ENCODE measurements at regions of chr22 and their contacts with region 1.

Region 1: DNA sequence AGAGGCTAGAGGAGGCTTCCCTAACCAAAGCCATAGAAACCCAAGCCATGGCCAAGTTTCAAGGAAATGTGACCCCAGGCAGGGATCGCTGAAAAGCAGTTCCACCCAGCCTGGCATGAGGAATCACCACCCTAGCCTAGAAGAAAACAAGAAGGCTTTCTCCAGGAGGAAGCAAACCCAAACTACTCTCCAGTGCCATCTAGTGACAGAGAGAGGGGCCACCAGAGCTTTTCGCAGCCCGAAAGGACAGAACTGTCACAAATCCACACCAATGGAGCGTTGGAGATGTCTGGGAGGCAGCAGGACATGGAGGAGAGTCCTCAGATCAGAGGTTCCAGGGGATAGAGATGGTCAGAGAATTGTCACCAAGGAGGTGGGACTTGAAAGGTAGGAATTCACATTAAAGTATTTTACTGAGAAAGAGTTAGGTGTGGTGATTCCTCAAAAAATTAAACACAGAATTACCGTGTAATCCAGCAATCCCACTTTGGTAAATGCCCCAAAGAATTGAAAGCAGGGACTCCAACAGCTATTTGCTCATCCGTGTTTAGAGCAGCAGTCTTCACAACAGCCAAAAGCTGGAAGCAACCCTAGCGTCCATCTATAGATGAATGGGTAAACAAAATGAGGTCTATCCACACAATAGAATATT is 67.3 kb upstream of the NUP50 start:
- DNase-seq: peak; percentile 22
- H3K4me3 Mint-ChIP-seq: no peak overlapping the region
- H3K27ac Mint-ChIP-seq: no peak overlapping the region
- H3K4me1 Mint-ChIP-seq: peaks cover 3% of the 10 kb centered on the region
- H3K27me3 Mint-ChIP-seq: peaks cover 16% of the 10 kb centered on the region

Region 2: DNA sequence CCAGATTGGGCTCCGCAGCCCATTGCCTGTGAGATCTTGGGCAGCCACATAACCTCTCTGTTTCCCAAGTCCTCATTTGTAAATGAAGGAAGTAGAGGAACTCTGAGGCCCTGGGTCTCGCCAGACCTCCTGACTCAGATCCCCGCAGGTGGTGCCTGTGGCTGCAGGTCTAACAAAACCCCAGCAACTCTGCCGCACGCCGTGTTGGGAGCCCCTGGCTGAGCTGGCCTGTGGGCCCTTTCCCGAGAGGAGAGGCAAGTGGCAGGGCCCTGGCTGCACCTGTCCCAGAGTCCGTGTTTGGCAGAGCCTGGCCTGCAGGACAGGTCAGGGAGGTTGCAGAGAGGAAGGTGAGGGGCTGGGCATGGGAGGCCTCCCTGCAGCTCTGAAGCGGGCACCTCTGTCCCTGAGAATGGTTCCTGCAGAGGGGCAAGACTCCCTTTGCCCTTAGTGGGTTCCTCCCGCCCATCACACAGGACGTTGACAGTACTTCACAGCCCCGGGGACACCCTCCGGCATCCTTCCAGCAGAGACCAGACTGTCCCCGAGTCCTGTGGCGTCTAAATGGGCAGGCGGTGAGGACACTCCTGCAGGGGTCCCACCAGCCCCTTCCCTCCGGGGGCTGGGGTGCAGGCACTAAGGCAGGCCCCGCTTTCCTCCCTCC is 276.3 kb before region 1 on chr22:
- intact Hi-C with region 1: loop called (anchors 1 kb)
- DNase-seq: no peak
- H3K4me3 Mint-ChIP-seq: no peak overlapping the region
- H3K27ac Mint-ChIP-seq: no peak overlapping the region
- H3K4me1 Mint-ChIP-seq: no peaks in the 10 kb centered on the region
- H3K27me3 Mint-ChIP-seq: no peaks in the 10 kb centered on the region

Region 3: GRCh38 chr22:44975427-44976262 is 120.7 kb before region 1 on chr22:
- intact Hi-C with region 1: loop called (anchors 1 kb)
- DNase-seq: peak; percentile 75
- H3K4me3 Mint-ChIP-seq: no peak overlapping the region
- H3K27ac Mint-ChIP-seq: no peak overlapping the region
- H3K4me1 Mint-ChIP-seq: no peaks in the 10 kb centered on the region
- H3K27me3 Mint-ChIP-seq: no peaks in the 10 kb centered on the region